Vagina (tissue), 2 donors: ENCODE measurements at regions of chr1 and their contacts with region 1.

Region 1: GRCh38 chr1:154220071-154220969 is at the start of gene UBAP2L:
- DNase-seq: peak; percentile 99 to 100
- H3K4me3 ChIP-seq: peak within 1 kb of the TSS; percentile 67 to 95
- H3K27ac ChIP-seq: peak within 1 kb of the TSS; percentile 100
- H3K4me1 ChIP-seq: peaks cover 65% of the 10 kb centered on the region
- H3K27me3 ChIP-seq: no peaks in the 10 kb centered on the region
- CTCF ChIP-seq: no peak
- POLR2A ChIP-seq: peak in 1 of 2 donors; percentile 76
- total RNA-seq, gene UBAP2L: 75.9 TPM

Region 2: GRCh38 chr1:154183045-154183915 is 37.0 kb before region 1 on chr1:
- intact Hi-C with region 1: loop called (anchors 2 kb)
- DNase-seq: peak; percentile 95 to 97
- H3K4me3 ChIP-seq: peak overlapping the region; percentile 84 to 88
- H3K27ac ChIP-seq: peak overlapping the region; percentile 94
- H3K4me1 ChIP-seq: peaks cover 38% of the 10 kb centered on the region
- H3K27me3 ChIP-seq: no peaks in the 10 kb centered on the region
- CTCF ChIP-seq: no peak
- POLR2A ChIP-seq: peak; percentile 91 to 97

Region 3: DNA sequence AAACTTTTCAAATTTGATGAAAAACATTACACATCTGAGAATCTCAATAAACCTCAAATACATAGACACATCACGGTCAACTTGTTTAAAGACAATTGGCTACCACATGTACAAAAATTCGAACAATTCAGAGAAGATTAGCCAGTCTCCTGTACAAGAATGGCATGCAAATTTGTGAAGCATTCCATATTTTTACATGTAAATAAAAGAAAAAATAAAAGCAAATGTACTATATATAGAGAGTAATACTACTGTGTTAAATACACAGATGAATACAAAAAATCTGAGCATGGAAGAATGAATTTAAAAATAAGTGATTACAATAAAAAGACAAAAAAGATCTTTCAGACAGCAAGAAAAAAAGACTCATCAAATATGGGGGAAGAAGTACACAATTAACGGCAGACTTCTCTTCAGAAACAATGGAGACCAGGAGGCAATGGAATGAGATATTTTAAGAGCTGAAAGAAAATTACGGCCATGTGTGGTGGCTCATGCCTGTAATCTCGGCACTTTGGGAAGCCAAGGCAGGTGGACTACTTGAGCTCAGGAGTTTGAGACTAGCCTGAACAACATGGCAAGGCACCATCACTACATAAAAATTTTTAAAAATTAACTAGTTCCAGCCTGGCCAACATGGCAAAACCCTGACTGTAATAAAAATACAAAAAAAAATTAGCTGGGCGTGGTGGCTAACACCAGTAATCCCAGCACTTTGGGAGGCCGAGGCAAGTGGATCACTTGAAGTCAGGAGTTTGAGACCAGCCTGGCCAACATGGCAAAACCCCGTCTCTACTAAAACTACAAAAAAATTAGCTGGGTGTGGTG is 75.3 kb after region 1 on chr1:
- intact Hi-C with region 1: no loop called
- DNase-seq: no peak
- H3K4me3 ChIP-seq: no peak overlapping the region
- H3K27ac ChIP-seq: no peak overlapping the region
- H3K4me1 ChIP-seq: no peaks in the 10 kb centered on the region
- H3K27me3 ChIP-seq: no peaks in the 10 kb centered on the region
- CTCF ChIP-seq: no peak
- POLR2A ChIP-seq: no peak